Caco-2 (cell line): ENCODE measurements at regions of chr13 and their contacts with region 1.

Region 1: DNA sequence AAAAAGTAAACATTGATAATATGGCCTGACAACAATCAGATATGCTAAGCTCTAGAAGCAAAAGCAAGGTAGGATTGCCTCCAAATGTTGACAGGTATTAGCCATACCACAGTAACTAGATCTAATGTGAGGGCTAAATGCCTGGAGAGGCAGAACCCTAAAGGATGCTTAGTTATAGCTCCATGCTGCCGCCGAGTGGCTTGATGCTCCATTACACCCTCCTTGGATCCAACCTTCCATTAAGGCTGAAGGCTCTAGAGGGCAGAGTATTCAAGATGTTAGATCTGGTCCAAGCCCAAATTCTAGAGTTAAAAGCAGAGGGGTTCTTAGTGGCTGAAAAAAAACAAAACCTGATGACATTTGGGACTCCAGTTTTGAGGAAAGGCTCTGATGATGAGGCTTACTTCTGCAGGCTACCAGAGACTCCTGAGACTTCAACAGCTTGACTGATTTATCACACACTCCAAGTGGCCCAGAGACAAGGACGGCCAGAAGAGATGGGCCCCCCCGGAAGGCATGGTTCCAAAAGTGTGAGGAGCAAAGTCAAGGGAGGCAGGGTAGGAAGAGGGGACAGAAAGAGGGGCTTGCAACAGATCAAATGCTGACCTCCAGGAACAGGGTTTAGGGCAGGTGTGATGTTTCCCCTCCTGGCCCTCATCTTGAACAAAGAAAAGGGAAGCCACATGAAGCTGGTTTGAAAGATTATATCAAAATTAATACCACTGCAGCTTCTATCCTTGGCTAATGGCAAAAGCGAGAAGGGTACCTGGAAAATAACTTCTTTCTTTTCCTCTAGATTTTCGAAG is 21.9 kb upstream of the CPB2 start:
- DNase-seq: peak; percentile 74 to 83
- H3K4me3 ChIP-seq: no peak overlapping the region
- H3K4me3 Mint-ChIP-seq: no peak overlapping the region
- H3K27ac Mint-ChIP-seq: no peak overlapping the region
- H3K4me1 ChIP-seq: peaks cover 12% of the 10 kb centered on the region
- H3K4me1 Mint-ChIP-seq: peaks cover 7% of the 10 kb centered on the region
- H3K27me3 ChIP-seq: no peaks in the 10 kb centered on the region
- H3K27me3 Mint-ChIP-seq: no peaks in the 10 kb centered on the region
- CTCF ChIP-seq: peak; percentile 88 to 93

Region 2: GRCh38 chr13:45807520-45808099 is 319.1 kb before region 1 on chr13:
- CTCF ChIA-PET with region 1: interaction called, 6 read pairs
- POLR2A ChIA-PET with region 1: no interaction called
- intact Hi-C with region 1: loop called (anchors 1 kb)
- DNase-seq: peak; percentile 61 to 63
- H3K4me3 ChIP-seq: no peak overlapping the region
- H3K4me3 Mint-ChIP-seq: no peak overlapping the region
- H3K27ac Mint-ChIP-seq: no peak overlapping the region
- H3K4me1 ChIP-seq: no peaks in the 10 kb centered on the region
- H3K4me1 Mint-ChIP-seq: no peaks in the 10 kb centered on the region
- H3K27me3 ChIP-seq: peaks cover 1% of the 10 kb centered on the region; the same call in 1 of the 2 replicates
- H3K27me3 Mint-ChIP-seq: peaks cover 9% of the 10 kb centered on the region
- CTCF ChIP-seq: peak; percentile 60 to 82

Region 3: DNA sequence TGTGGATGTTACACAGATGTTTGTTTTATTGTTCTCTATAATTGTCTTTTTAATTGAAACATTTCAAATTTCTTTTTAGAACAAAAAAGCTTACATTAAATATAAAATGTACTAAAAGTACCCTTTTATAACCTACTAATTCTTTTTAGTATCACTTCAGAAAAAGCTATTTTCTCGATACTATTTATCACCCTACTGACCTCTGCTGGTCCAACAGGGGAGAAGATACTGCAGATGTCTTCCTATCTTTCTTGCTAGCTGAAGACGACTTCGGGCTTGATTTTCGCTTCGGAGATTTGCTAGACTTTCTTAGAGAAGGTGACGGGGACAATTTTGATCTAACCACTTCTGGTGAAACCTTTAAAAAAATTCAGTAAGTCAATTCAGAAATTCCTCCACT is 116.6 kb before region 1 on chr13:
- CTCF ChIA-PET with region 1: no interaction called
- POLR2A ChIA-PET with region 1: no interaction called
- intact Hi-C with region 1: loop called (anchors 1 kb)
- DNase-seq: peak in 1 of 2 experiments; percentile 18
- H3K4me3 ChIP-seq: no peak overlapping the region
- H3K4me3 Mint-ChIP-seq: no peak overlapping the region
- H3K27ac Mint-ChIP-seq: no peak overlapping the region
- H3K4me1 ChIP-seq: no peaks in the 10 kb centered on the region
- H3K4me1 Mint-ChIP-seq: no peaks in the 10 kb centered on the region
- H3K27me3 ChIP-seq: no peaks in the 10 kb centered on the region
- H3K27me3 Mint-ChIP-seq: no peaks in the 10 kb centered on the region
- CTCF ChIP-seq: peak; percentile 34 to 50

Region 4: GRCh38 chr13:46052319-46053161 is 74.2 kb before region 1 on chr13 and contains the start of gene ZC3H13:
- CTCF ChIA-PET with region 1: interaction called, 5 read pairs
- POLR2A ChIA-PET with region 1: no interaction called
- intact Hi-C with region 1: loop called (anchors 1 kb)
- DNase-seq: peak; percentile 94 to 96
- H3K4me3 ChIP-seq: peak within 1 kb of the TSS; percentile 88
- H3K4me3 Mint-ChIP-seq: peak within 1 kb of the TSS; percentile 77
- H3K27ac Mint-ChIP-seq: peak within 1 kb of the TSS; percentile 91
- H3K4me1 ChIP-seq: peaks cover 6% of the 10 kb centered on the region
- H3K4me1 Mint-ChIP-seq: peaks cover 8% of the 10 kb centered on the region
- H3K27me3 ChIP-seq: no peaks in the 10 kb centered on the region
- H3K27me3 Mint-ChIP-seq: peaks cover 9% of the 10 kb centered on the region
- CTCF ChIP-seq: peak; percentile 28 to 45
- total RNA-seq, gene ZC3H13: 45.0 and 47.0 TPM in 2 replicates

Region 5: GRCh38 chr13:46071590-46072249 is 55.0 kb before region 1 on chr13:
- CTCF ChIA-PET with region 1: interaction called, 10 read pairs
- POLR2A ChIA-PET with region 1: no interaction called
- intact Hi-C with region 1: loop called (anchors 1 kb)
- DNase-seq: peak; percentile 23 to 40
- H3K4me3 ChIP-seq: no peak overlapping the region
- H3K4me3 Mint-ChIP-seq: no peak overlapping the region
- H3K27ac Mint-ChIP-seq: no peak overlapping the region
- H3K4me1 ChIP-seq: no peaks in the 10 kb centered on the region
- H3K4me1 Mint-ChIP-seq: no peaks in the 10 kb centered on the region
- H3K27me3 ChIP-seq: no peaks in the 10 kb centered on the region
- H3K27me3 Mint-ChIP-seq: peaks cover 6% of the 10 kb centered on the region
- CTCF ChIP-seq: peak in 1 of 2 experiments; percentile 39

Region 6: DNA sequence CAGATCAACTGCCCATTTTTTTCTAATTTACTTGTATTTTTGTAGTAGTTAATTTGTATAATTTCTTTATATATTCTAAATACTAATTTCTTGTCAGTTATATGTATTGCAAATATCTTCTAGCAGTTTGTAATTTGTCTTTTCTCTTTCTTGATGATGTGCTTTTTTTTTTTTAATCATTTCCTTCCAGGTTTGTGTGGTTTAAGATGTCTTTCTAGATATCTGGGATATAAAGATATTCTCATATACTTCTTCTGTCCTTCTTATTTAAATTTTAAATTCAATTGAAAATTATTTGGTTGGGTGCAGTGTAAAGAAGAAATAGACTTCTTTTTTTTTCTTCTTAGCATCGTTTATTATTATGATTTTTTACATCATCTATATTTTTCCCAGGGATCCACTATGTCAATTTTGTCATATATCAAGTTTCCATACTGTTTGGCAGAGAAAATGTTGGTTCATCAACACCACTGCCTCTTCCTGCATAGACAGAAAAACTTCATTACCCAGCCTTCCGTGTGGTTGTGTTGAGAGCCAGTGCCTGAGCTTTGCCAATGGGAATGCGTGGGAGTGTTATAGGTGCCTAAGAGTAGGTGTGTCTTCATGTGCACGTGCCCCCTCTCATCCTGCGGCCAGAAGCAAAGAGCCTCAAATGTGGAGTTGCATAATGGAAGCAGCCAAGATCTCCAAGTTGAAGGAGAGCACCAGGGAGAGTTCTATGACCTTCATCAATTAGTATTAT is 37.8 kb before region 1 on chr13:
- CTCF ChIA-PET with region 1: no interaction called
- POLR2A ChIA-PET with region 1: no interaction called
- intact Hi-C with region 1: no loop called
- DNase-seq: no peak
- H3K4me3 ChIP-seq: no peak overlapping the region
- H3K4me3 Mint-ChIP-seq: no peak overlapping the region
- H3K27ac Mint-ChIP-seq: no peak overlapping the region
- H3K4me1 ChIP-seq: no peaks in the 10 kb centered on the region
- H3K4me1 Mint-ChIP-seq: no peaks in the 10 kb centered on the region
- H3K27me3 ChIP-seq: no peaks in the 10 kb centered on the region
- H3K27me3 Mint-ChIP-seq: peaks cover 22% of the 10 kb centered on the region
- CTCF ChIP-seq: no peak

Region 7: DNA sequence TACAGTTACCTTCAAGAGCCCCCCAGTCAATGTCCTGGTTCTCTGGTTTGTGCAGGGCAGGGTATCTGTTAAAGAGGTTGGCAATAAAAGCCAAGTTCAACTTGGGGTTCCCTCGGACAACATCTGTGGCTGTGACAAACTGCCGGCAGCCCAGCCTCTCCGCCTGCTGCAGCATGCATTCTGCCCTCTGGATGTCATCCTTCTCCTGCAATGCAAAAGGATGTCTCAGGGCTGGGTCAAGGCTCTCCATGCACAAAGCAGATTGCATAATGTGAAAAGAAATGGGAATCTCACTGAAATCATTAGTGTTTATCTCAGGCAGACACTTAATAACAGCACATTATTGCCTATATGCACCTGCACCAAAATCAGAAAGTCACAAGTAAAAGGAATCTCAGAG is 20.1 kb after region 1 on chr13:
- CTCF ChIA-PET with region 1: interaction called, 10 read pairs
- POLR2A ChIA-PET with region 1: interaction called, 3 read pairs
- intact Hi-C with region 1: no loop called
- DNase-seq: peak; percentile 58 to 63
- H3K4me3 ChIP-seq: no peak overlapping the region
- H3K4me3 Mint-ChIP-seq: no peak overlapping the region
- H3K27ac Mint-ChIP-seq: no peak overlapping the region
- H3K4me1 ChIP-seq: peaks cover 32% of the 10 kb centered on the region
- H3K4me1 Mint-ChIP-seq: peaks cover 29% of the 10 kb centered on the region
- H3K27me3 ChIP-seq: no peaks in the 10 kb centered on the region
- H3K27me3 Mint-ChIP-seq: no peaks in the 10 kb centered on the region
- CTCF ChIP-seq: peak; percentile 54 to 59

Region 8: GRCh38 chr13:47158593-47158992 is 1031.8 kb after region 1 on chr13:
- CTCF ChIA-PET with region 1: no interaction called
- POLR2A ChIA-PET with region 1: no interaction called
- intact Hi-C with region 1: no loop called
- DNase-seq: no peak
- H3K4me3 ChIP-seq: no peak overlapping the region
- H3K4me3 Mint-ChIP-seq: no peak overlapping the region
- H3K27ac Mint-ChIP-seq: no peak overlapping the region
- H3K4me1 ChIP-seq: no peaks in the 10 kb centered on the region
- H3K4me1 Mint-ChIP-seq: no peaks in the 10 kb centered on the region
- H3K27me3 ChIP-seq: no peaks in the 10 kb centered on the region
- H3K27me3 Mint-ChIP-seq: peaks cover 13% of the 10 kb centered on the region
- CTCF ChIP-seq: no peak